ENCODE measurements at regions of chr2 and their contacts with region 1.

Region 1: GRCh38 chr2:33033606-33034081 is 86.9 kb downstream of the LTBP1 start:
- DNase-seq: no peak
- ATAC-seq: peak; percentile 66 to 85 (median 73)
- H3K4me3 ChIP-seq: peak overlapping the region in 5 of 10 donors; percentile 21 to 41 (median 24)
- H3K27ac ChIP-seq: no peak overlapping the region
- H3K4me1 ChIP-seq: peaks cover 0 to 34% (median 5%) of the 10 kb centered on the region in 9 donors
- H3K27me3 ChIP-seq: no peaks in the 10 kb centered on the region
- CTCF ChIP-seq: peak; percentile 46 to 81 (median 64)

Region 2: GRCh38 chr2:32559136-32559535 is 474.5 kb before region 1 on chr2:
- intact Hi-C with region 1: loop called in 7 of 10 experiments (anchors 5 to 10 kb)
- DNase-seq: no peak
- ATAC-seq: peak in 7 of 8 donors; percentile 58 to 87 (median 81)
- H3K4me3 ChIP-seq: no peak overlapping the region
- H3K27ac ChIP-seq: peak overlapping the region in 1 of 10 donors; percentile 10
- H3K4me1 ChIP-seq: peaks cover 0 to 16% (median 5%) of the 10 kb centered on the region in 9 donors
- H3K27me3 ChIP-seq: no peaks in the 10 kb centered on the region
- CTCF ChIP-seq: no peak

Region 3: GRCh38 chr2:32946314-32947075 is 87.1 kb before region 1 on chr2 and contains the start of gene LTBP1:
- intact Hi-C with region 1: loop called in 7 of 10 experiments (anchors 2 to 10 kb)
- DNase-seq: peak; percentile 80 to 84
- ATAC-seq: peak; percentile 87 to 95 (median 91)
- H3K4me3 ChIP-seq: peak within 1 kb of the TSS; percentile 51 to 96 (median 73)
- H3K27ac ChIP-seq: peak within 1 kb of the TSS; percentile 79 to 94 (median 91)
- H3K4me1 ChIP-seq: peaks cover 0 to 33% (median 17%) of the 10 kb centered on the region in 9 donors
- H3K27me3 ChIP-seq: peaks cover 0 to 54% (median 0%) of the 10 kb centered on the region in 7 donors
- CTCF ChIP-seq: peak; percentile 62 to 89 (median 83)
- total RNA-seq, gene LTBP1: 72.4 to 164 (median 90.3) TPM

Region 4: GRCh38 chr2:33205693-33206434 is 172.2 kb after region 1 on chr2:
- intact Hi-C with region 1: no loop called
- DNase-seq: no peak
- ATAC-seq: no peak
- H3K4me3 ChIP-seq: no peak overlapping the region
- H3K27ac ChIP-seq: no peak overlapping the region
- H3K4me1 ChIP-seq: peaks cover 0 to 36% (median 15%) of the 10 kb centered on the region in 9 donors
- H3K27me3 ChIP-seq: no peaks in the 10 kb centered on the region
- CTCF ChIP-seq: no peak

Region 5: DNA sequence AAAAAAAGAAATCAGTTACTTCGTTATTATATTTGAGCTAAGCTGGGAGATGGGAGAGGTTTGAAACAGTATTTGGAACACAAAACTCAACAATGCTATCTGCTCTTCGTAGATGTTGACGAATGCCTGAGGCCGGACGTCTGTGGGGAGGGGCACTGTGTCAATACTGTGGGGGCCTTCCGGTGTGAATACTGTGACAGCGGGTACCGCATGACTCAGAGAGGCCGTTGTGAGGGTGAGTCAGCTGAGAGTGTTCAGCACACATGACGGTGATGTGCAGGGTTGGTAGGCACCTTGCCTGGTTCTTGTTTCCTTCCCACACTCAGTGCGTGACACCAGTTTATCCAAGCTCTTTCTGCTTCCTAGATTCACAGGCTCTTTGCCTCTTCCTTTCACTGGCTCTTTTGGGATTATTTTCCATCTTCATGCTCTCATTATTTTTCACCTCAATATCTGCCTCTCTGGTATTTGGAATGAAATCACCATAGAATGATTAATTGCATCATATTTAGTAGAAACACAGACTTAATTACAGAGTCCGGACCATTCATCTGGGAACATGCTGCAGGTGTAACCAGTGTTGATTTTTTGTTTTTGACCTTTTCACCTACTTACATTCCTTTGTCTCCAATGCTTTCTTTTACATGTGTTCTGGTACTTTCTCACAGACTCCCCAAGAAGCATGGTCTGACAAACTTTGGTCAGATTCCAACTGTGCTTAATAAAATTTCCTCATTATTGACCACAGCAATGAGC is 242.2 kb after region 1 on chr2:
- intact Hi-C with region 1: loop called in 2 of 10 experiments (anchors 5 to 10 kb)
- DNase-seq: peak in 1 of 2 donors; percentile 25
- ATAC-seq: peak; percentile 13 to 87 (median 58)
- H3K4me3 ChIP-seq: no peak overlapping the region
- H3K27ac ChIP-seq: peak overlapping the region in 4 of 10 donors; percentile 13 to 71 (median 51)
- H3K4me1 ChIP-seq: peaks cover 0 to 32% (median 3%) of the 10 kb centered on the region in 9 donors
- H3K27me3 ChIP-seq: no peaks in the 10 kb centered on the region
- CTCF ChIP-seq: no peak

Region 6: DNA sequence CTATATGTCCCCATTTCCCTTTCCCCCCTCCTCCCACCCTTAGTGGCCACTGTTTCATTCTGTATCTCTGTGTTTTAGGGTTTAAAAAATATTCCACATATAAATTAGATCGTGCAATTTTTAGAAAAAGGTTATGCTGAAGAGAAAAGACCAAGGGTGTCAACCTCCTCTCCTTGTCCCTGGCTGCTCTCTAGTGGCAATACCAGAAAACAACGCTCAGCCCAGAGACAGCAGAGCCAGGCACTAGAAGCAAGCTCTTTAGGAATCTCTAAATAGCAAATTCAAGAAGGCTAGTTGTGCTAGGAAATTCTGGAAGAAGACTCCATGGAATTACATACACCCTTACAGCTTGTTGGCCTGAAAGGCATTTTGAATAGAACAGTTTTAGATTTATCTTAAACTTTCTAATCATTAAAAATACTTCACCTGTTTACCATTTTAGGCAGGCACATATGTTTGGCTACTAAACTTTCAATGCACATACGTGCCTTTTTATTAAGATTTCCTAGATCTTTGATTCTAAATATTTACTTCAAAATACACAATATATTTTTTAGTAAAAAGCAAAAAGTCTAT is 407.7 kb after region 1 on chr2:
- intact Hi-C with region 1: loop called in 4 of 10 experiments (anchors 2 to 10 kb)
- DNase-seq: peak in 1 of 2 donors; percentile 72
- ATAC-seq: peak; percentile 57 to 89 (median 83)
- H3K4me3 ChIP-seq: no peak overlapping the region
- H3K27ac ChIP-seq: peak overlapping the region in 5 of 10 donors; percentile 8 to 82 (median 75)
- H3K4me1 ChIP-seq: peaks cover 0 to 69% (median 24%) of the 10 kb centered on the region in 9 donors
- H3K27me3 ChIP-seq: no peaks in the 10 kb centered on the region
- CTCF ChIP-seq: peak; percentile 46 to 85 (median 67)

Region 7: GRCh38 chr2:33583194-33583938 is 549.7 kb after region 1 on chr2:
- intact Hi-C with region 1: loop called in 2 of 10 experiments (anchors 2 to 10 kb)
- DNase-seq: peak in 1 of 2 donors; percentile 27
- ATAC-seq: peak in 4 of 8 donors; percentile 41 to 67 (median 50)
- H3K4me3 ChIP-seq: no peak overlapping the region
- H3K27ac ChIP-seq: peak overlapping the region in 2 of 10 donors; percentile 3 to 32
- H3K4me1 ChIP-seq: peaks cover 0 to 27% (median 13%) of the 10 kb centered on the region in 9 donors
- H3K27me3 ChIP-seq: no peaks in the 10 kb centered on the region
- CTCF ChIP-seq: peak; percentile 73 to 89 (median 81)